ENCODE measurements at regions of chr15 and their contacts with region 1.

Region 1: GRCh38 chr15:31215490-31216214 is 111.0 kb upstream of the KLF13 start:
- DNase-seq: peak; percentile 76
- H3K4me3 Mint-ChIP-seq: peak overlapping the region; percentile 79
- H3K27ac Mint-ChIP-seq: peak overlapping the region; percentile 73
- H3K4me1 Mint-ChIP-seq: peaks cover 48% of the 10 kb centered on the region
- H3K27me3 Mint-ChIP-seq: no peaks in the 10 kb centered on the region

Region 2: DNA sequence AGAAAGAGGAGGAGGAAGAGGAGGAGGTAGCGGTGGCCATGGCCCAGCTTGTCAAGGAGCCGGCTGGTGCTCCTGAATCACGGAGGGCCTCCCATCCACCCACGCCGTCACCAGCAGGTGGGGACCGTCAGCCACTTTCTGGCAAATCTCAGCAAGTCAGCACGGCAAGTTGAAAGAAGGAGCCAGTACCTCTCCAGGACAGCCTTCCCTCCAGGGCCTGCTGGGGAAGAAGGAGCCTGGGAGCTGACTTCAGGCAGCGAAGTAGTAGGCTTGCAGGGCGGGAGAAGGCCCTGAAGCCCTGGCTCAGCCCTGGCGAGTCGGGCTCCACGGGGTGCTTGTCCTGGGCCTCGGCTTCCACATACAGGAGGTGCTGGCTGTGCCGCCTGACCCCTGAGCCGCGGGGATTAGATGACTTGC is 14.9 kb before region 1 on chr15:
- intact Hi-C with region 1: loop called (anchors 2 kb)
- DNase-seq: peak; percentile 57
- H3K4me3 Mint-ChIP-seq: no peak overlapping the region
- H3K27ac Mint-ChIP-seq: no peak overlapping the region
- H3K4me1 Mint-ChIP-seq: peaks cover 50% of the 10 kb centered on the region
- H3K27me3 Mint-ChIP-seq: peaks cover 14% of the 10 kb centered on the region